HAP-1 (cell line): ENCODE measurements at regions of chr19 and their contacts with region 1.

Region 1: GRCh38 chr19:17282488-17283255 is 971 bp downstream of the ANKLE1 start:
- DNase-seq: peak; percentile 78 to 94
- H3K4me3 ChIP-seq: peak overlapping the region; percentile 59
- H3K4me1 ChIP-seq: peaks cover 15% of the 10 kb centered on the region
- H3K27me3 ChIP-seq: no peaks in the 10 kb centered on the region

Region 2: GRCh38 chr19:16860118-16860517 is 422.6 kb before region 1 on chr19:
- in situ Hi-C with region 1: no loop called
- DNase-seq: no peak
- H3K4me3 ChIP-seq: no peak overlapping the region
- H3K4me1 ChIP-seq: no peaks in the 10 kb centered on the region
- H3K27me3 ChIP-seq: no peaks in the 10 kb centered on the region

Region 3: GRCh38 chr19:17069218-17069617 is 213.5 kb before region 1 on chr19:
- in situ Hi-C with region 1: loop called (anchors 5 kb)
- DNase-seq: no peak
- H3K4me3 ChIP-seq: no peak overlapping the region
- H3K4me1 ChIP-seq: peaks cover 6% of the 10 kb centered on the region
- H3K27me3 ChIP-seq: no peaks in the 10 kb centered on the region

Region 4: DNA sequence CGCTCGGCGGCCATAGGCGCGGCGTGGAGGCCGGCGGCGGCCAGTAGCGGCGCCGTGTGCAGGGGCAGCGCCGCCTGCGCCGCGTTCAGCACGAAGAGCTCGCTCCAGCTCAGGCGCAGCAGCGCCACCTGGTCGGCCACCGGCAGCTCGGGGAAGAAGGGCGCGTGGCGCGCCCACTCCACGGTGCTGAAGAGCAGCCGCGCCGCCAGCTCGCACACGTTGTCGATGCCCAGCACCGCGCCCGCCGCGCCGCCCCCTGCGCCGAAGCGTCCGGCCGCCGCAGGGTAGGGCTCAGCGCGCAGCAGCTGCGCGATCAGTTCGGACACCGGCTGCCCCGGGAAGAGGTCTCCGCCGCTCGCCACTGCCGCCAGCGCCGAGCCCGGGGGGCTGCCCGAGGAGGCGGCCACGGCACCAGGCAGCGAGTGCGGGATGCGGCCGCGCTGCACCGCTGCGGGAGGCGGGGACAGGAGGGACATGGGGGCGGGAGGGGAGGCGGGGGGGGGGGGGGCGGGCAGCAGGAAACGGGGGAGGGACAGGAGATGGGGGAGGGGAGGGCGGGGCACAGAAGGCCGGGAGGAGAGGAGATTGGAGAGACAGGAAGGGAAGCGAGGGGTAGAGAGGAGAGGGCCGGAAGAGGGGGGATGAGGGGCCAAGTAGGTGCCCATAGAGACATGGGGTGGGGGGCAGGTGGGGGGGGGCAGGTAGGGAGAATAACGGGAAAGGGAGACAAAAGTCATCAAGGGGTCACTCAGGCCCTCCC is 46.9 kb before region 1 on chr19:
- in situ Hi-C with region 1: no loop called
- DNase-seq: peak; percentile 49 to 73
- H3K4me3 ChIP-seq: peak overlapping the region; percentile 54
- H3K4me1 ChIP-seq: peaks cover 12% of the 10 kb centered on the region
- H3K27me3 ChIP-seq: no peaks in the 10 kb centered on the region